AG04449 (cell line): ENCODE measurements at regions of chr6 and their contacts with region 1.

Region 1: DNA sequence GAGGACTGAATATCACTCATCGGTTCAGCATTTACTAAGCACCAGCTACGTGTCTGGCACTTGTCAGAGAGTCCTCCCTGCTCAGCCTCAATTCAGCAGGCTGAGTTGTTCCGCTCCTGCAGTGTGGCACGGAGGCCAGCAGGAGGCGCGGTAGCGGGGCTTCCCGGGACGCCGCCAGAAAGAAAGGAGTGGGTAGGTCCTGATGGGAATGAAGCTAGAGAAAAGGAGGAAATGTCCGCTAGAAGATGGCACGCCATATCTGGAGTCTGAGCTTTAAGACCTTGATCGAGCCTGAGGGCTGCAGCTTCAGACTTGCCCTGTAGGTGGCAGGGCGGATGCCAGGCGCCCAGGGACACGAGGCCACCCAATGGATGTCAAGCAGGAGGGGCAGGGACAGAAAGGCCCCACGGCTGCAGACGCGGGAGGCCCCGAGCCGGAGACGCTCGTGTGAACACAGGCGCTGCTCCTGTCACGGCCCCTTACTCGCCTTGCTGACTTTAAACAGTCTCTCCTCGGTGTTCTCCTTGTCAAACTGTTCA is 18.7 kb downstream of the SERPINB6 start:
- DNase-seq: peak; percentile 65
- H3K4me3 ChIP-seq: peak overlapping the region; percentile 4
- CTCF ChIP-seq: peak; percentile 73

Region 2: GRCh38 chr6:2542858-2543218 is 409.8 kb before region 1 on chr6:
- CTCF ChIA-PET with region 1: no interaction called
- POLR2A ChIA-PET with region 1: no interaction called
- DNase-seq: no peak
- H3K4me3 ChIP-seq: no peak overlapping the region
- CTCF ChIP-seq: no peak

Region 3: DNA sequence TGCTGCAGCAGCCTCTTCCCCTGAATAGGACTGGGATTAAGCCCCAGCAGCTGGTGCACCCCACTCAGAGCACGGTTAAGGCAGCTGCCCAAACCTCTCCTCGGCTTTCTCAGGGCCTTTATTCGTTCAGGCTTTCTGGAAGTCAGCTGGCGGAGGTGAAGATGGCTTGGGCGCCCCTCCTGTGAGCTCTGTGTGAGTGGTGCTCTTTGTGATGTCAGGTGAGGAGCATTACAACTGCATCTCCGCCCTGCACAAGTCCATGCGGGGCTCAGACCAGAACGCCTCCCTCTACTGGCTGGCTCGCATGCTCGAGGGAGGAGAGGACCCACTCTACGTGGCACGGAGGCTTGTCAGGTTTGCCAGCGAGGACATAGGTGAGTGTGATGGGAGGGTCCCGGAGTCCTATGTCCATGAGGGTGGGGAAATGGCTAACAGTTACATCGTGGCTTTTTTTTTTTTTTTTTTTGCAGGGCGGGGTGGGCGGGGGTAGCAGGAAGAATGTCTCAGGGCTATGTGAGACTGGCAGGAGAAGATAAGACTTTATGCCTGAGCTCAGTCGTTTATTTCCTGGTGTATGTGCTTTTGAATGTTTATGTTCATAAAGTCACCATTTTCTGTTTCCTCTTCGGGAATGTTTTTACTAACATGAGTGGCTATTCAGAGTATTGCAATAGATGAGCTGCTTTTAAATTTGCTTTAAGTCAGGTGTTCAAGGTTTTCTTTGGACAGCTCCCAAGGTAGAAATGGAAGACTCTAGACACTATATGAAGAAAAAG is 169.2 kb before region 1 on chr6:
- CTCF ChIA-PET with region 1: interaction called, 12 read pairs
- POLR2A ChIA-PET with region 1: no interaction called
- DNase-seq: no peak
- H3K4me3 ChIP-seq: no peak overlapping the region
- CTCF ChIP-seq: no peak

Region 4: GRCh38 chr6:2848851-2849250 is 103.8 kb before region 1 on chr6:
- CTCF ChIA-PET with region 1: interaction called, 37 read pairs
- POLR2A ChIA-PET with region 1: no interaction called
- DNase-seq: no peak
- H3K4me3 ChIP-seq: no peak overlapping the region
- CTCF ChIP-seq: no peak

Region 5: GRCh38 chr6:2931970-2932748 is 20.5 kb before region 1 on chr6:
- CTCF ChIA-PET with region 1: interaction called, 252 read pairs
- POLR2A ChIA-PET with region 1: no interaction called
- DNase-seq: peak; percentile 1
- H3K4me3 ChIP-seq: no peak overlapping the region
- CTCF ChIP-seq: peak; percentile 95

Region 6: DNA sequence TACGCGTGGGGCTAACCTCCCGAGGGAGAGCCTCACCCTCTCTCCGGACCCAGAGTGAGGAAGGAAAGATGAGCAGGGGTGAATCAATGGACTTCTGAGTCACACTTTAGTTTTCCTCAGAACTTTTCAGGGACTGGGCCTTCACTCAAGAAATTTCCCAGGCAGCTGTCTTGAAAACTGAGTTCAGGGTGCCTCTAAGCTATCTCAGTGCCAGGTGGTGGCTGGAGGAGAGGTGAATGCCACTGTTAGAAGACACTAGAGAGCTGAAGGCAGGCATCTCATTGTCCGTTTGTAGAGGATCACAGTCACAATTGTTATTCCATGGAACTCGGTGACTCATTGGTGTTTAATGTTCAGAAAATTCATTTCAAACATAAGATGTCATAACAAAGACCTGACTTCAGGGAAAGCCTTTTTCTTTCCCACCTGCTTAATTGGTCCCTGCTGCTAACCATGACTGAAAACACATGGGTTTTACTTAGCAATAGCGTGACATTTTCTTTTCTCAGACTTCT is 24.0 kb after region 1 on chr6:
- CTCF ChIA-PET with region 1: interaction called, 51 read pairs
- POLR2A ChIA-PET with region 1: interaction called, 3 read pairs
- DNase-seq: no peak
- H3K4me3 ChIP-seq: no peak overlapping the region
- CTCF ChIP-seq: no peak

Region 7: GRCh38 chr6:3052481-3053230 is 100.0 kb after region 1 on chr6:
- CTCF ChIA-PET with region 1: interaction called, 11 read pairs
- POLR2A ChIA-PET with region 1: no interaction called
- DNase-seq: no peak
- H3K4me3 ChIP-seq: no peak overlapping the region
- CTCF ChIP-seq: no peak

Region 8: GRCh38 chr6:3410385-3411360 is 458.0 kb after region 1 on chr6:
- CTCF ChIA-PET with region 1: no interaction called
- POLR2A ChIA-PET with region 1: no interaction called
- DNase-seq: no peak
- H3K4me3 ChIP-seq: no peak overlapping the region
- CTCF ChIP-seq: peak; percentile 72